Right ventricle myocardium inferior (tissue), 1 donor: ENCODE measurements at regions of chr17 and their contacts with region 1.

Region 1: DNA sequence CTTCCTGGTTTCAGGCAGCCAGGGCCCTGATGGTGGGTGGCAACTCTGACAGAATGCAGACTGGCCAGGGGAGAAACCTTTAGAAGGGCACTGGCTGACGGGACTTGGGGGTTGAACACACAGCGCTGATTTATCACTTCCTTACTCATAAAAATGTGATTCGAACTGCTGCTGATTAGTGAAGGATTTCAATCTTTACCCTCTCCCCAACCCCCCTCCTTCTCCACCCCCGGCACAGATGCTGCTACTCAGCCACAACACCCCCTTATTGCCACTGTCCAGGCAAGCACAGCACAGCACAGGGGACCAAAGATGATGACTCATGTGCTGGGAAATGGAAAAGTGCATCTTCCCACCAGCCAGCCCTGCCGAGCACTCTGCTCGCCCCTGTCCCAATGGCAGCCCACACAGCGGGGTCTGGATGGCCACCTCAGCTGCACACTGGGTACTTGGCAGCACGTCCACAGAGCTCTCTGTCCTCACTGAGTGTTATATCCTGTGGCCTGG is 70.1 kb downstream of the SMG6 start:
- DNase-seq: no peak
- ATAC-seq: peak; percentile 17

Region 2: GRCh38 chr17:2122641-2123302 is 110.7 kb before region 1 on chr17:
- intact Hi-C with region 1: loop called (anchors 5 kb)
- DNase-seq: peak; percentile 85
- ATAC-seq: peak; percentile 75

Region 3: GRCh38 chr17:2309338-2310154 is 76.1 kb after region 1 on chr17:
- intact Hi-C with region 1: no loop called
- DNase-seq: no peak
- ATAC-seq: no peak